ENCODE measurements at regions of chr1 and their contacts with region 1.

Region 1: GRCh38 chr1:12019858-12020509 is 686 bp downstream of the MIIP start:
- DNase-seq: no peak
- ATAC-seq: peak; percentile 10
- H3K4me3 Mint-ChIP-seq: peak overlapping the region; percentile 83
- H3K27ac Mint-ChIP-seq: peak overlapping the region; percentile 87
- H3K4me1 Mint-ChIP-seq: peaks cover 14% of the 10 kb centered on the region
- H3K27me3 Mint-ChIP-seq: no peaks in the 10 kb centered on the region

Region 2: GRCh38 chr1:11784993-11785769 is 234.8 kb before region 1 on chr1:
- CTCF ChIA-PET with region 1: no interaction called
- POLR2A ChIA-PET with region 1: no interaction called
- DNase-seq: peak; percentile 46
- ATAC-seq: peak; percentile 83
- H3K4me3 Mint-ChIP-seq: no peak overlapping the region
- H3K27ac Mint-ChIP-seq: no peak overlapping the region
- H3K4me1 Mint-ChIP-seq: peaks cover 8% of the 10 kb centered on the region
- H3K27me3 Mint-ChIP-seq: no peaks in the 10 kb centered on the region

Region 3: DNA sequence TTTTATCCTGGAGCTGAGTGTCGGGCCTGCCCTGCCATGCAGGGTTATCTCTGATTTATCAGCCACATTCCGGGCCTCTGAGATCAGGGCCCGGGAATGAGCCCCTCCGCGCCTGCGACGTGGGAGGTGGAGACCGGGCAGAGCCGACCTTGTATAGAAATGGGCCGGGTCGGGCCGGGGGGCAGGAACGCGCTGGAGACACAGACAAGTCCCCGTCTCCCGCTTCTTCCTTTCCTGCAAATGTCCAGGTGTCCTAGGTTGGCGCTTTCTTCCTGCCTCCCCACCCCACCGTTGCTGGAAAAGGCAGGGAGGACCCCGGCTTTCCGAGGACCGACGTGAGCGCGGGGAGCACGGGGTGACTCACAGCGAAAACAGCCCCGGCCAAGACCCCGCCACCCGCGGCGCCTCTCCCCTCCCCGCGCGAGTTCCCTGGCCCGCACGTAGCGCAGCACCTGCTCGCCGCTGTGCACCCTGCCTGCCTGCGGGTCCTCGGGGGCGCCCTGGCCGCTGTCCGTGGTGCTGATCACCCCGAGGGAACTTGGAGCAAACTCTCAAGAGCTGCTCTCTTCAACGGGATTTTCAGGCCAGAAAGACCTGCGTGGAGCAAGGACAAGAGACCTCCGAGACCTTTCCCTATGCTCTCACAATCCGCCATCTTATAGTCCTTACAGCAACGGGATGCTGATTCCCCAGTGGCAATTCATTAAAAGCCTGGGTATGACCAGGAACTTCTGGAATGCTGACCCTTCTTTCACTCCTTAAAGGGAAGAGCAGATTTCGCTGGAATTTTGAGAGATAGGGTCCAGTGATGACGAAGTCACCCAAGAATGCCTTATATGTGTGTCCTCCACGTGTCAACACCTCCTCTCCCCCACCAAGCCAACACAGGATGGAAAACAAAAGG is 160.8 kb before region 1 on chr1:
- CTCF ChIA-PET with region 1: no interaction called
- POLR2A ChIA-PET with region 1: no interaction called
- DNase-seq: peak; percentile 88
- ATAC-seq: peak; percentile 93
- H3K4me3 Mint-ChIP-seq: no peak overlapping the region
- H3K27ac Mint-ChIP-seq: no peak overlapping the region
- H3K4me1 Mint-ChIP-seq: peaks cover 16% of the 10 kb centered on the region
- H3K27me3 Mint-ChIP-seq: peaks cover 39% of the 10 kb centered on the region

Region 4: GRCh38 chr1:11990303-11991032 is 29.5 kb before region 1 on chr1:
- CTCF ChIA-PET with region 1: no interaction called
- POLR2A ChIA-PET with region 1: no interaction called
- DNase-seq: no peak
- ATAC-seq: no peak
- H3K4me3 Mint-ChIP-seq: no peak overlapping the region
- H3K27ac Mint-ChIP-seq: no peak overlapping the region
- H3K4me1 Mint-ChIP-seq: peaks cover 12% of the 10 kb centered on the region
- H3K27me3 Mint-ChIP-seq: no peaks in the 10 kb centered on the region

Region 5: GRCh38 chr1:12031039-12031980 is 11.3 kb after region 1 on chr1:
- CTCF ChIA-PET with region 1: interaction called, 22 read pairs
- POLR2A ChIA-PET with region 1: no interaction called
- DNase-seq: peak; percentile 56
- ATAC-seq: peak; percentile 76
- H3K4me3 Mint-ChIP-seq: no peak overlapping the region
- H3K27ac Mint-ChIP-seq: no peak overlapping the region
- H3K4me1 Mint-ChIP-seq: no peaks in the 10 kb centered on the region
- H3K27me3 Mint-ChIP-seq: no peaks in the 10 kb centered on the region

Measured in activated CD8-positive, alpha-beta T cell treated with anti-CD3 and anti-CD28 coated beads, Interleukin-2, amount 10 ng/mL, durations not matched to agents 7 days and 5 days (primary cell).